ENCODE measurements at regions of chr19 and their contacts with region 1.

Region 1: DNA sequence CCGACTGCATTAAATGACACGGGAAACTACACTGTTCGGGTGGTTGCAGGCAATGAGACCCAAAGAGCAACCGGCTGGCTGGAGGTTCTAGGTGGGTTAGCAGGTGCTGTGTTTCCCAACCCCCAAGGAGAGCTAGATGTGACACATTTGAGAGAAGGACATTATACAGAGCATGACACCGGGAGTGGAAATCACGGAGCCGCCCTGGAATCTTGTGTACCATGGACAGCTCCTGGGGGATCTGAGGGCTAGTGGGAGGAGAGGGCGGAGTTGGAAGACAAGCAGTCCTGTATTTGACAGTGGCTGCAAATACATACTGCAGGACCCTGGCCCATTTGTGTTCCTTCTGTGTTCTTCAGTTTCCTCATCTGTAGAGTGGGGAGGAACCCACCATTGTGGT is 2.3 kb downstream of the CEACAM18 start:
- DNase-seq: no peak
- ATAC-seq: no peak
- H3K4me3 ChIP-seq: no peak overlapping the region
- H3K4me3 Mint-ChIP-seq: no peak overlapping the region
- H3K27ac ChIP-seq: no peak overlapping the region
- H3K27ac Mint-ChIP-seq: no peak overlapping the region
- H3K4me1 ChIP-seq: no peaks in the 10 kb centered on the region
- H3K4me1 Mint-ChIP-seq: no peaks in the 10 kb centered on the region
- H3K27me3 ChIP-seq: peaks cover 0 to 20% (median 8%) of the 10 kb centered on the region in 4 experiments
- H3K27me3 Mint-ChIP-seq: peaks cover 40% of the 10 kb centered on the region
- CTCF ChIP-seq: no peak

Region 2: DNA sequence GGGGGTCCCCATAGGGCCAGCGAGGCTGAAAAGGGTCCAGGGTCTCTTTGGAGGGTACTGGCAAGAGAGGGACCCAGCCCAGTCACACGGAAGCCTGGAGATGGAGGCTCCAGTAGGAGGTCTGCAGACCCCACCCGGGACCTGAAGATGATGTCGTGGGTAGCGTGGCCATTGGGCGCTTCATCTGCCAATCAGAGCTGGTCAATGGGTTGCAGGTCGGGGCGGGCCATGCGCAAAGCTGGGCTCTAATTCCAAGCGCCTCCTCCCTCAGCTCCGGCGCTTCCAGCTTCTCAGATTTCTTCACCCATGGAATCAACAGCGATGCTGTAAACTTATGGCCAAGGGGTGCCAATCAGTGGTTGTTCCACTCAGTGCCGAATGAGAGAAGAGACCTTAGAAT is 10.1 kb after region 1 on chr19:
- CTCF ChIA-PET with region 1: no interaction called
- POLR2A ChIA-PET with region 1: interaction called, 13 read pairs
- intact Hi-C with region 1: no loop called
- DNase-seq: no peak
- ATAC-seq: no peak
- H3K4me3 ChIP-seq: no peak overlapping the region
- H3K4me3 Mint-ChIP-seq: no peak overlapping the region
- H3K27ac ChIP-seq: no peak overlapping the region
- H3K27ac Mint-ChIP-seq: no peak overlapping the region
- H3K4me1 ChIP-seq: no peaks in the 10 kb centered on the region
- H3K4me1 Mint-ChIP-seq: no peaks in the 10 kb centered on the region
- H3K27me3 ChIP-seq: peaks cover 0 to 8% (median 0%) of the 10 kb centered on the region in 4 experiments
- H3K27me3 Mint-ChIP-seq: peaks cover 45% of the 10 kb centered on the region
- CTCF ChIP-seq: no peak

Region 3: GRCh38 chr19:51559240-51559639 is 78.7 kb after region 1 on chr19:
- CTCF ChIA-PET with region 1: no interaction called
- POLR2A ChIA-PET with region 1: no interaction called
- intact Hi-C with region 1: no loop called
- DNase-seq: no peak
- ATAC-seq: no peak
- H3K4me3 ChIP-seq: no peak overlapping the region
- H3K4me3 Mint-ChIP-seq: no peak overlapping the region
- H3K27ac ChIP-seq: no peak overlapping the region
- H3K27ac Mint-ChIP-seq: no peak overlapping the region
- H3K4me1 ChIP-seq: peaks cover 10 to 13% of the 10 kb centered on the region in 2 donors
- H3K4me1 Mint-ChIP-seq: peaks cover 32% of the 10 kb centered on the region
- H3K27me3 ChIP-seq: no peaks in the 10 kb centered on the region
- H3K27me3 Mint-ChIP-seq: no peaks in the 10 kb centered on the region
- CTCF ChIP-seq: no peak

Region 4: DNA sequence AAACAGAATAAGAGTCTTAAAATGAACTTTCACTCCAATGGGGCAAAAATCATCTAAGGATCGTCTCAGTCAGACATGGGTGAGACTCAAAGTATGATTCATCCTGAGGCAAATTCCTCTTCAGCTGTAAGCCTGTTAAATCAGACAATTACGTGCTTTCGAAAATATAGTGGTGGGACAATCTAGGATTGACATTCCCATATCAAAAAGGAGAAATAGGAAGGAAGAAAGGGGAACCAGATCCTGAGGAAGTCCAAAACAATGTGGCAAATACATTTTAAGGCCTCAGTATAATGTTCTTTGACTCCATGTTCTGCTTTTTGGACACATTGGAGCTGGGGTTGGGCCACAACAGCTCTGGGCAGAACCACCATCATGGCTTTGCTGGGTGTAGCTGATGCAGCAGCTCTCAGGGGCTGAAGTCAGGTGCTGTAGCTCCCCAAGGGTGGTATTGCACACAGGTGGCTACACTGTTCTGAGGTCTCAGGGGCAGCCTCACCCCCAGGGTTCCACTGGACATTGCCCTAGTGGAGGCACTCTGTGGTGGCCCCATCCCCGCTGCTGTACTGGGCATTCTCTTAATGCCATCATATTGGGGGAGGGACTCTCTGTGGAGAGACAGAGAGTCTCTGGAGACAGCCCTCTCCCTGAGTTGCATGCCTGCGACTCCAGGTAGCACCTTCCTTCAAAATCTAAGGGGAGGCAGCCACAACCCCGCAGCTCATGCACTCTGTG is 308.6 kb after region 1 on chr19:
- CTCF ChIA-PET with region 1: no interaction called
- POLR2A ChIA-PET with region 1: no interaction called
- intact Hi-C with region 1: no loop called
- DNase-seq: no peak
- ATAC-seq: no peak
- H3K4me3 ChIP-seq: no peak overlapping the region
- H3K4me3 Mint-ChIP-seq: no peak overlapping the region
- H3K27ac ChIP-seq: no peak overlapping the region
- H3K27ac Mint-ChIP-seq: no peak overlapping the region
- H3K4me1 ChIP-seq: no peaks in the 10 kb centered on the region
- H3K4me1 Mint-ChIP-seq: peaks cover 3% of the 10 kb centered on the region
- H3K27me3 ChIP-seq: no peaks in the 10 kb centered on the region
- H3K27me3 Mint-ChIP-seq: peaks cover 4% of the 10 kb centered on the region
- CTCF ChIP-seq: no peak

Measured in B cell (primary cell).